Natural killer cell (primary cell): ENCODE measurements at regions of chr2 and their contacts with region 1.

Region 1: GRCh38 chr2:72862239-72862988 is 24.8 kb upstream of the SPR start:
- DNase-seq: peak; percentile 81 to 93
- ATAC-seq: peak; percentile 93 to 98 (median 97)
- H3K4me3 ChIP-seq: no peak overlapping the region
- H3K4me3 Mint-ChIP-seq: peak overlapping the region; percentile 54
- H3K27ac ChIP-seq: no peak overlapping the region
- H3K27ac Mint-ChIP-seq: no peak overlapping the region
- H3K4me1 ChIP-seq: peaks cover 8% of the 10 kb centered on the region
- H3K4me1 Mint-ChIP-seq: peaks cover 8 to 9% of the 10 kb centered on the region in 2 donors
- H3K27me3 ChIP-seq: peaks cover 19% of the 10 kb centered on the region
- H3K27me3 Mint-ChIP-seq: peaks cover 34 to 62% of the 10 kb centered on the region in 2 donors
- CTCF ChIP-seq: peak; percentile 95

Region 2: GRCh38 chr2:72770879-72771461 is 91.4 kb before region 1 on chr2:
- intact Hi-C with region 1: loop called (anchors 1 kb)
- DNase-seq: peak in 1 of 2 donors; percentile 85
- ATAC-seq: peak; percentile 61 to 74 (median 62)
- H3K4me3 ChIP-seq: no peak overlapping the region
- H3K4me3 Mint-ChIP-seq: no peak overlapping the region
- H3K27ac ChIP-seq: no peak overlapping the region
- H3K27ac Mint-ChIP-seq: no peak overlapping the region
- H3K4me1 ChIP-seq: no peaks in the 10 kb centered on the region
- H3K4me1 Mint-ChIP-seq: no peaks in the 10 kb centered on the region
- H3K27me3 ChIP-seq: no peaks in the 10 kb centered on the region
- H3K27me3 Mint-ChIP-seq: no peaks in the 10 kb centered on the region
- CTCF ChIP-seq: peak; percentile 95

Region 3: DNA sequence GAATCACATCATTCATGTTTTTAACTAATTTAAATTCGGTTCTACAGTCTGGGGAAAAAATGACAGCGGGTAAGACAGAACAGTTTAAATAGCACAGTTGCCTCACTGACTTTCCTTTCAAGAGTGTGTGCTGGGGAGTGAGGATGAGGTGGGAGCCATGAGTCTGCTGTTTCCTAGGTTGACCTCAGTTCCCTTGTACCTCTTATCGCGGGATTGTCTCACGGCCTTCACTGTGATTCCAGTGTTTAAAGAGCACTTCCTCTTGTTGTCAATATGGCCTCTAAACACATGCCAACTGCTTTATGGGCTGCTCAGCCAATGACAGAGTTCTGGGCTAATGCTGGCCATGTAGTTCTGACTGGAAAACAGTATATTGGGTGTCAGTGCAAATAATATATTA is 481.6 kb after region 1 on chr2:
- intact Hi-C with region 1: no loop called
- DNase-seq: no peak
- ATAC-seq: no peak
- H3K4me3 ChIP-seq: no peak overlapping the region
- H3K4me3 Mint-ChIP-seq: no peak overlapping the region
- H3K27ac ChIP-seq: no peak overlapping the region
- H3K27ac Mint-ChIP-seq: no peak overlapping the region
- H3K4me1 ChIP-seq: no peaks in the 10 kb centered on the region
- H3K4me1 Mint-ChIP-seq: no peaks in the 10 kb centered on the region
- H3K27me3 ChIP-seq: no peaks in the 10 kb centered on the region
- H3K27me3 Mint-ChIP-seq: peaks cover 16 to 19% of the 10 kb centered on the region in 2 donors
- CTCF ChIP-seq: no peak